ENCODE measurements at regions of chr1 and their contacts with region 1.

Region 1: GRCh38 chr1:180881806-180882509 is 30.7 kb upstream of the KIAA1614 start:
- DNase-seq: peak; percentile 60
- H3K4me3 Mint-ChIP-seq: no peak overlapping the region
- H3K27ac Mint-ChIP-seq: peak overlapping the region; percentile 44
- H3K4me1 Mint-ChIP-seq: peaks cover 14% of the 10 kb centered on the region
- H3K27me3 Mint-ChIP-seq: no peaks in the 10 kb centered on the region
- CTCF ChIP-seq: peak; percentile 67

Region 2: DNA sequence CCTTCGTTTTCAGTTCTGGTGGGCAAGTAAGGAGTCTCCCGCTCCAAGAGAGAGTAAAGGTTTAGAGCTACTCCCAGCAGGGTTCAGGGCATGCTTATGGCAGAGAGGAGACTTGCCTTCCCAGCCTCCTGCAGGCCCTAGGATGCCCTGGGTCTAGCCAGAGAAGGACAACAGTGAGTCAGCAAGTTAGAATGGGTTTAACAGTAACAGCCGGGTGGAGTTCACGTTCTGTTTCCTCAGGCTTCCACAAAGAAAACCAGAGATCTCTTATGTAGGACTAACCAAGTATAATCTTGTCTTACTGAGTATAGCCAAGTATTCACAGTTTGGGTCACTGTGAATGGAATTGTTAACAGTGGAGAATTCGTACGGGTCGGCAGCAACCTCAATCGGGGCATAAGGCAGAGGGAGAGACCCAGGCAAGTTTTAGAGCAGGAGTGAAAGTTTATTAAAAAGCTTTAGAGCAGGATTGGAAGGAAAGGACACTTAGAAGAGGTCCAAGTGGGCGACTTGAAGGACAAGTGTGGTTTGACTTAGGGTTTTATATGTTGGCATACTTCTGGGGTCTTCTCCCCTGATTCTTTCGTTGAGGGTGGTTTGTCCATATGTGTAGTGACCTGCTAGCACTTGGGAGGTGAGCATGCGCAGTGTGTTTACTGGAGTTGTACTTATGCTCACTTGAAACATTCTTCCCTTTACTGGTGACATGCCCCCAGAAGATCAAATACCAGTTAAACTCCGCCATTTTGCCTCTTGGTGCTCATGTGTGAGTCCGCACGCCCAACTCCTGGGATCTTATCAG is 318.7 kb before region 1 on chr1:
- CTCF ChIA-PET with region 1: no interaction called
- POLR2A ChIA-PET with region 1: no interaction called
- intact Hi-C with region 1: no loop called
- DNase-seq: peak; percentile 49
- H3K4me3 Mint-ChIP-seq: no peak overlapping the region
- H3K27ac Mint-ChIP-seq: peak overlapping the region; percentile 20
- H3K4me1 Mint-ChIP-seq: peaks cover 24% of the 10 kb centered on the region
- H3K27me3 Mint-ChIP-seq: no peaks in the 10 kb centered on the region
- CTCF ChIP-seq: no peak

Region 3: DNA sequence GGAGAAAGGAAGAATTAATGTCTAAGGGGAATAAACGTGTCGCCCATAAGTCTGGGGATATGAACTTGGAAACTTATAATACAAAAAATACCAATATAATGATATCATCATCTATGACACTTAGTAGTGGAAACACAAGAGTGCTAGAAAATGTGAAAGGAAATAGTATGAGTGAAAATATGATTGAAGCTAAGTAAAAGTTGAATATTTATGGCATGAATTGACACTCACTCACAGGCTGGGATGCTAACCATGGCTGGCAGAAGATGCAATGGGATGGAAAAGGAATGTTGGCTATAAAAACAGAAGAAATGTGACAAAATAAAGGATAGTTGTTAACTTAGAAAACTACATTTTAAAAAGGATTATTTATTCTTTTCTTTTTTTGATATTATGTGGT is 130.0 kb before region 1 on chr1:
- CTCF ChIA-PET with region 1: no interaction called
- POLR2A ChIA-PET with region 1: no interaction called
- intact Hi-C with region 1: no loop called
- DNase-seq: no peak
- H3K4me3 Mint-ChIP-seq: no peak overlapping the region
- H3K27ac Mint-ChIP-seq: no peak overlapping the region
- H3K4me1 Mint-ChIP-seq: no peaks in the 10 kb centered on the region
- H3K27me3 Mint-ChIP-seq: no peaks in the 10 kb centered on the region
- CTCF ChIP-seq: no peak

Region 4: GRCh38 chr1:180898441-180899219 is 16.7 kb after region 1 on chr1:
- CTCF ChIA-PET with region 1: interaction called, 12 read pairs
- POLR2A ChIA-PET with region 1: no interaction called
- intact Hi-C with region 1: no loop called
- DNase-seq: no peak
- H3K4me3 Mint-ChIP-seq: no peak overlapping the region
- H3K27ac Mint-ChIP-seq: no peak overlapping the region
- H3K4me1 Mint-ChIP-seq: no peaks in the 10 kb centered on the region
- H3K27me3 Mint-ChIP-seq: no peaks in the 10 kb centered on the region
- CTCF ChIP-seq: no peak

Region 5: DNA sequence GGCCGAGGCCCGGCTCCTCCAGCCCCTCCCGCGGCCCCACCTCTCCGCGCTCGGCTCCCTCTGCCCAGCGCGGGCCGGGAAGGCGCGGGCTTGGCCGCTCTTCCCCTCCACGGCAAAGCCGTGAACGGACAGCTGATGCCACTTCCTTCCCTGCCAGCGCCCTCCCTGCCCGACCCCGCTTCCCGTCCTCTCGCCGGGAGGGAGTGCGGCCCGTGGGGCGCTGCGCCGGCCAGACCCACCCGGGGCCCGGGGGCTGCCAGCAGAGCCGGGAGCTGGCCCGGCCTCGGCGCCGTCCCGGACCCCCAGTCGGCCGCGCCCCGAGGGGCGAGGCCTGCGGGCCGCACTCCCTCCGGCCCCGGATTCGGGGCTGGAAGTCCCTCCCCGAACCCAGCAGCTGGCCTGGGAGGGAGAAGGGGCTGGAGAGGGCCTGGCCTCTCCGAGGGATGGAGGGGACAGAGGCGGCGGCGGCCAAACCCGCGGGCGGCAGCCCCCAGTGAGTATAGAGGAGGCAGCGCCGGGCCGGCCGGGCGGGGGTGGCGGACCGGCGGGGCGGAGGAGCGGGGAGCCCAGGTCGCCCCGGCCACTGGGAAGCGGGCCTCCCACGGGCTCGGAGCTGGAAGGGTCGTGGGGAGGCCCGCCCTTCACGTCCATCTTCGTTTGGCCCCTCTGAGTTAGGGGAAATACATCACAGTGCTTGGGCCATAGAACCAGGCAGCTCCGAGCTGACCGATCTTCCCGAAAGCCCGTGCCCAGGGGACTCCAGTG is 31.0 kb after region 1 on chr1 and contains the start of gene KIAA1614:
- CTCF ChIA-PET with region 1: no interaction called
- POLR2A ChIA-PET with region 1: no interaction called
- intact Hi-C with region 1: loop called (anchors 1 kb)
- DNase-seq: no peak
- H3K4me3 Mint-ChIP-seq: peak within 1 kb of the TSS; percentile 21
- H3K27ac Mint-ChIP-seq: no peak within 1 kb of the TSS
- H3K4me1 Mint-ChIP-seq: no peaks in the 10 kb centered on the region
- H3K27me3 Mint-ChIP-seq: no peaks in the 10 kb centered on the region
- CTCF ChIP-seq: no peak
- total RNA-seq, gene KIAA1614: 0.66 and 1.1 TPM in 2 replicates

Region 6: GRCh38 chr1:181002582-181003172 is 120.7 kb after region 1 on chr1:
- CTCF ChIA-PET with region 1: interaction called, 14 read pairs
- POLR2A ChIA-PET with region 1: interaction called, 3 read pairs
- intact Hi-C with region 1: no loop called
- DNase-seq: no peak
- H3K4me3 Mint-ChIP-seq: no peak overlapping the region
- H3K27ac Mint-ChIP-seq: no peak overlapping the region
- H3K4me1 Mint-ChIP-seq: peaks cover 5% of the 10 kb centered on the region
- H3K27me3 Mint-ChIP-seq: no peaks in the 10 kb centered on the region
- CTCF ChIP-seq: no peak

Region 7: DNA sequence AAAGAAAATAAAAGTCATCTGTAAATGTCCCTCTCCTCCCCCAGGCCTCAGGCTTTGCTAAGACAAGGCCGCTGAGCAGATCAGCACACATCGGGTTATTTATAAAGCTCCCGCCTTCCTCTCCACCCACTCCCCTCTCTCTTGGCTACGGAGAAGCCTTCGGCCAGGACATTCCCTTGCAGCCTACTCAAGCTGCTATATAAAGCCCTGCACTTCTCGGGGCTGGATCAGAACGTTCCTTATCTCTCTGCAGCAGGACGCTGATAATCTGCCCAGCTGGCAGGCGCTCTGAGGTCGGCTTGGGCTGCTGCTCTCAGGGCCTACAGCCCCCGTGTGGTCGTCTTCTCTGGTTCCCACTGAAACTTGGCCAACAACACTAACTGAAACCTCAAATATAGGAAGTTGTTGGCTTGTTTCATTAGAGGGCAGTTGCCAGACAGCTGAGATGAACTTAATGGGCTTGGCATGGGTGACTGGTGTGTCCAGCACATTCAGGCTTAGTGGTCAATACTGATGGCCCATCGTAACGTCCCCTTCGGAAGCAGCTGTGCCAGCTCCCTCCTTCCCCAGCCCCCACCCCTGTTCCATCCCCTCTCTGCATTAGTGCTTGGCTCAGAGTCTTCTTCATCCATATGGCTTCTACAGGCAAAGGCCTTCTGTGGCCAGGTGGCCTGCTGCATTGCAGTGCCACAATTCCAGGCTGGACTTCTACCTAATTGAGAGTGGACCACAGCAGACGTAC is 271.1 kb after region 1 on chr1:
- CTCF ChIA-PET with region 1: interaction called, 55 read pairs
- POLR2A ChIA-PET with region 1: interaction called, 5 read pairs
- intact Hi-C with region 1: no loop called
- DNase-seq: peak; percentile 28
- H3K4me3 Mint-ChIP-seq: no peak overlapping the region
- H3K27ac Mint-ChIP-seq: no peak overlapping the region
- H3K4me1 Mint-ChIP-seq: peaks cover 33% of the 10 kb centered on the region
- H3K27me3 Mint-ChIP-seq: no peaks in the 10 kb centered on the region
- CTCF ChIP-seq: no peak

Region 8: DNA sequence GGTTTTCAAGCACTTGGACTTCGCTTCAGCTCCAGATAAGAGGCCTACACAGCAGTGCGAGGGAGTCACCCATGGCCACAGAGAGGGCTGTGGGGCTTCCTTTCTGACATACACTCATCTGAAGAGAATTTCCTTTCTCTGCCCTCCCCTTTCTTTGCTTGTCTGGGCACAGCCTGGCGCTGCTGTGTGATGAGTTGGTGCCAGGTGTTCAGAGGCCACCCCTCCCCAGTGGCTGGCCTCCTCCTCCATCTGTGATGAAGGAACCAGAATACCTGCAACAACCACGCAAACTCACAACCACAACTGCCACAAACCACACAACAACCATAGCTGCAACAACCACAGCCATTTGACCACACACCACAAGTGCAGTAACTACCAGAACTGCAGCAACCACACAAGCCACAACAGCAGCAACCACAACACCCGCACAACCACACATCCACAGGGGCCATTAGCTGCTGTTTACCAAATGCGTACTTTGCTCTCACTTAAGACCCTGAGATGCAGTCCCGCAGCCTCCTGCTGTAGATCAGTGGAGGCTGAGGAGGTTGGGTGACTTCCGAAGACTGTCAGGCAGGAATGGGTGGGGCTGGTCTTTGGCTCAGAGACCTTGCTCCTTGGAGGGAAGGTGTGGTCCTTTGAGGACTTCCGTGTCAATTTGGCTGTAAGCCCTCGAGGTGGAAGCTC is 277.6 kb after region 1 on chr1:
- CTCF ChIA-PET with region 1: interaction called, 55 read pairs
- POLR2A ChIA-PET with region 1: interaction called, 3 read pairs
- intact Hi-C with region 1: no loop called
- DNase-seq: peak; percentile 94
- H3K4me3 Mint-ChIP-seq: peak overlapping the region; percentile 35
- H3K27ac Mint-ChIP-seq: peak overlapping the region; percentile 71
- H3K4me1 Mint-ChIP-seq: peaks cover 22% of the 10 kb centered on the region
- H3K27me3 Mint-ChIP-seq: no peaks in the 10 kb centered on the region
- CTCF ChIP-seq: no peak

Region 9: GRCh38 chr1:181166377-181167196 is 284.6 kb after region 1 on chr1:
- CTCF ChIA-PET with region 1: interaction called, 124 read pairs
- POLR2A ChIA-PET with region 1: interaction called, 10 read pairs
- intact Hi-C with region 1: loop called (anchors 1 kb)
- DNase-seq: peak; percentile 90
- H3K4me3 Mint-ChIP-seq: no peak overlapping the region
- H3K27ac Mint-ChIP-seq: no peak overlapping the region
- H3K4me1 Mint-ChIP-seq: no peaks in the 10 kb centered on the region
- H3K27me3 Mint-ChIP-seq: no peaks in the 10 kb centered on the region
- CTCF ChIP-seq: peak; percentile 97

Region 10: GRCh38 chr1:181310560-181310959 is 428.6 kb after region 1 on chr1:
- CTCF ChIA-PET with region 1: no interaction called
- POLR2A ChIA-PET with region 1: no interaction called
- intact Hi-C with region 1: no loop called
- DNase-seq: peak; percentile 22
- H3K4me3 Mint-ChIP-seq: no peak overlapping the region
- H3K27ac Mint-ChIP-seq: no peak overlapping the region
- H3K4me1 Mint-ChIP-seq: no peaks in the 10 kb centered on the region
- H3K27me3 Mint-ChIP-seq: peaks cover 18% of the 10 kb centered on the region
- CTCF ChIP-seq: no peak